ENCODE measurements at regions of chr9 and their contacts with region 1.

Region 1: GRCh38 chr9:91361291-91362050 is at the start of gene AUH:
- DNase-seq: peak; percentile 87
- ATAC-seq: peak; percentile 92
- H3K4me3 Mint-ChIP-seq: peak within 1 kb of the TSS; percentile 89
- H3K27ac Mint-ChIP-seq: peak within 1 kb of the TSS; percentile 87
- H3K4me1 Mint-ChIP-seq: peaks cover 45% of the 10 kb centered on the region
- H3K27me3 Mint-ChIP-seq: no peaks in the 10 kb centered on the region
- CTCF ChIP-seq: no peak
- total RNA-seq, gene AUH: 30.8 to 31.1 TPM

Region 2: GRCh38 chr9:91036826-91037510 is 324.5 kb before region 1 on chr9:
- CTCF ChIA-PET with region 1: interaction called, 4 read pairs
- POLR2A ChIA-PET with region 1: no interaction called
- intact Hi-C with region 1: loop called (anchors 10 kb)
- DNase-seq: peak; percentile 85
- ATAC-seq: peak; percentile 89
- H3K4me3 Mint-ChIP-seq: peak overlapping the region; percentile 37
- H3K27ac Mint-ChIP-seq: peak overlapping the region; percentile 69
- H3K4me1 Mint-ChIP-seq: peaks cover 52% of the 10 kb centered on the region
- H3K27me3 Mint-ChIP-seq: peaks cover under 1% of the 10 kb centered on the region
- CTCF ChIP-seq: peak; percentile 74

Region 3: DNA sequence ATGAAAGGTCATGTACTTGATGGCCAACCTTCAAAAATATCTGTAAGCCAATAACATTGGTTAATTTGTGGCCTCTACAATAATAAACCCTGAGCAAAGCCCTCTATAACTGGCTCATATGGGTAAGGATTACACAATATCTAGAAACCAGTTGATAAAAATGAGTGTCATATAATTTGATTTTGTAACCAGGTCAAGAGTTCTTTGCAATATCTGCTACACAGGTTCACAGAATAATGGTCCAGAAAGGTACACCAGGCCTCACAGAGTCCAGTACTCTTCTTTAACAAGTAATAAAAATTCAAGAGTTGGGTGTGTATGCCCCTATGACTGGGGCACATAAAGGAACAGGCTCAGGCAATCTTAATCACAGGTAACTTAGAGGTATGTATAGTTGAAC is 95.0 kb before region 1 on chr9:
- CTCF ChIA-PET with region 1: no interaction called
- POLR2A ChIA-PET with region 1: no interaction called
- intact Hi-C with region 1: no loop called
- DNase-seq: no peak
- ATAC-seq: no peak
- H3K4me3 Mint-ChIP-seq: no peak overlapping the region
- H3K27ac Mint-ChIP-seq: no peak overlapping the region
- H3K4me1 Mint-ChIP-seq: peaks cover 18% of the 10 kb centered on the region
- H3K27me3 Mint-ChIP-seq: no peaks in the 10 kb centered on the region
- CTCF ChIP-seq: no peak

Region 4: GRCh38 chr9:91312717-91313344 is 48.6 kb before region 1 on chr9:
- CTCF ChIA-PET with region 1: no interaction called
- POLR2A ChIA-PET with region 1: no interaction called
- intact Hi-C with region 1: no loop called
- DNase-seq: no peak
- ATAC-seq: no peak
- H3K4me3 Mint-ChIP-seq: no peak overlapping the region
- H3K27ac Mint-ChIP-seq: no peak overlapping the region
- H3K4me1 Mint-ChIP-seq: peaks cover 7% of the 10 kb centered on the region
- H3K27me3 Mint-ChIP-seq: no peaks in the 10 kb centered on the region
- CTCF ChIP-seq: no peak

Region 5: DNA sequence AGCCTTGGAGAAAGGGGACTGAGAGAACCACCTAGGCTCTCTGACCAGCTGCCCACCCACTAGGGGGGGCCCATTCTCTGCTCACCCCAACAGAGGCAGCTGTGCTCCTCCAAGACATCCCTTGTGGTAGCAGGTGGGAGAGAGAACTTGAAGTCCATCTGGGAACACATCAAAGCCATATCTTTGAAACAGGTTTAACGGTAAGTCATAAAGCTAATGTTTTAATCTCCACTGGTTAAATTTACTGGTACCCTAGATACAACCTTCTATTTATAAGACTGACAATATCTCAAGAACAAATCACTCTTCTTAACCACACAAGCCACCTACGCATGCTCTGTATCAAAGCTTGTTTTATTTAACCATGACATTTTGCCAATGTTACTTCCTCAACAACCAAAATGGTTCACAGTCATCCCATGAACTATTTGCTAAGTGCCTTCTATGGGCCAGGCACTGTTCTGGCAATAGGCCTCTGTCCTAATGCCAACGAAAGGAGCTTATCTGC is 20.2 kb before region 1 on chr9:
- CTCF ChIA-PET with region 1: interaction called, 5 read pairs
- POLR2A ChIA-PET with region 1: interaction called, 28 read pairs
- intact Hi-C with region 1: no loop called
- DNase-seq: peak; percentile 45
- ATAC-seq: peak; percentile 75
- H3K4me3 Mint-ChIP-seq: no peak overlapping the region
- H3K27ac Mint-ChIP-seq: peak overlapping the region; percentile 71
- H3K4me1 Mint-ChIP-seq: peaks cover 50% of the 10 kb centered on the region
- H3K27me3 Mint-ChIP-seq: no peaks in the 10 kb centered on the region
- CTCF ChIP-seq: no peak

Region 6: DNA sequence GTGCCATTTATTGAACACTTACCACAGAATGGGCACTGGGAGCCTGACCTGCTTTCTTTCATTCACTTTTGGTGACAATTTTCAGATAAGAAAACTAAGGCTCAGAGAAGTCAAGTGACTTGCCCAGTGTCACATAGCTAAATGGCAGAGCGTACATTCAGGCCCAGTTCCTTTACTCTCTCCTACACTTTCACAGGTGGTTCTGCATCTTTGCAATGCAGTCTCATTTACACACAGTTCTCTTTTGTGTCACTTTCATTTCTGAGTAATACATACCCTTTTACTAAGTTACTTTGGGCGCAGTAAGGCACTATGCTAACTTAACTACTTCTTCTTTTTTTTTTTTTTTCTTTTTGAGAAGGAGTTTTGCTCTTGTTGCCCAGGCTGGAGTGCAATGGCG is 53.8 kb after region 1 on chr9:
- CTCF ChIA-PET with region 1: no interaction called
- POLR2A ChIA-PET with region 1: interaction called, 12 read pairs
- intact Hi-C with region 1: loop called (anchors 5 kb)
- DNase-seq: no peak
- ATAC-seq: peak; percentile 81
- H3K4me3 Mint-ChIP-seq: no peak overlapping the region
- H3K27ac Mint-ChIP-seq: peak overlapping the region; percentile 86
- H3K4me1 Mint-ChIP-seq: peaks cover 73% of the 10 kb centered on the region
- H3K27me3 Mint-ChIP-seq: no peaks in the 10 kb centered on the region
- CTCF ChIP-seq: no peak

Region 7: GRCh38 chr9:91433180-91433579 is 71.7 kb after region 1 on chr9:
- CTCF ChIA-PET with region 1: interaction called, 12 read pairs
- POLR2A ChIA-PET with region 1: no interaction called
- intact Hi-C with region 1: no loop called
- DNase-seq: peak; percentile 26
- ATAC-seq: peak; percentile 87
- H3K4me3 Mint-ChIP-seq: no peak overlapping the region
- H3K27ac Mint-ChIP-seq: no peak overlapping the region
- H3K4me1 Mint-ChIP-seq: peaks cover 10% of the 10 kb centered on the region
- H3K27me3 Mint-ChIP-seq: peaks cover 19% of the 10 kb centered on the region
- CTCF ChIP-seq: peak; percentile 40